ENCODE measurements at regions of chr6 and their contacts with region 1.

Region 1: DNA sequence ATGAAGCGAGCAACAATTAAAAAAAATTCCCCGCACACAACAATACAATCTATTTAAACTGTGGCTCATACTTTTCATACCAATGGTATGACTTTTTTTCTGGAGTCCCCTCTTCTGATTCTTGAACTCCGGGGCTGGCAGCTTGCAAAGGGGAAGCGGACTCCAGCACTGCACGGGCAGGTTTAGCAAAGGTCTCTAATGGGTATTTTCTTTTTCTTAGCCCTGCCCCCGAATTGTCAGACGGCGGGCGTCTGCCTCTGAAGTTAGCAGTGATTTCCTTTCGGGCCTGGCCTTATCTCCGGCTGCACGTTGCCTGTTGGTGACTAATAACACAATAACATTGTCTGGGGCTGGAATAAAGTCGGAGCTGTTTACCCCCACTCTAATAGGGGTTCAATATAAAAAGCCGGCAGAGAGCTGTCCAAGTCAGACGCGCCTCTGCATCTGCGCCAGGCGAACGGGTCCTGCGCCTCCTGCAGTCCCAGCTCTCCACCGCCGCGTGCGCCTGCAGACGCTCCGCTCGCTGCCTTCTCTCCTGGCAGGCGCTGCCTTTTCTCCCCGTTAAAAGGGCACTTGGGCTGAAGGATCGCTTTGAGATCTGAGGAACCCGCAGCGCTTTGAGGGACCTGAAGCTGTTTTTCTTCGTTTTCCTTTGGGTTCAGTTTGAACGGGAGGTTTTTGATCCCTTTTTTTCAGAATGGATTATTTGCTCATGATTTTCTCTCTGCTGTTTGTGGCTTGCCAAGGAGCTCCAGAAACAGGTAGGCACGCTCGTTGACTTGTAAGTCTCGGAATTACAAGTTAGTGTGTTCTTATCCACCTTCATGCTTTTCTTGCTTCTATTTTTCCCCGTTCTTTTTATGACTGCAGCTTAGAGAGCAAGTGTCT is at the start of gene EDN1:
- DNase-seq: peak; percentile 61 to 81
- H3K4me3 ChIP-seq: peak within 1 kb of the TSS; percentile 26 to 69 (median 50); a peak in 7 of 8 replicates
- H3K27ac ChIP-seq: no peak within 1 kb of the TSS
- H3K4me1 ChIP-seq: peaks cover 9 to 20% (median 11%) of the 10 kb centered on the region in 4 experiments
- H3K27me3 ChIP-seq: peaks cover 0 to 10% (median 2%) of the 10 kb centered on the region in 4 experiments; a peak in 4 of 7 replicates
- CTCF ChIP-seq: peak; percentile 52 to 58 (median 54)
- EP300 ChIP-seq: no peak
- POLR2A ChIP-seq: no peak
- RAD21 ChIP-seq: peak; percentile 54 to 65
- total RNA-seq, gene EDN1: 1.1 and 1.2 TPM in 2 replicates

Region 2: DNA sequence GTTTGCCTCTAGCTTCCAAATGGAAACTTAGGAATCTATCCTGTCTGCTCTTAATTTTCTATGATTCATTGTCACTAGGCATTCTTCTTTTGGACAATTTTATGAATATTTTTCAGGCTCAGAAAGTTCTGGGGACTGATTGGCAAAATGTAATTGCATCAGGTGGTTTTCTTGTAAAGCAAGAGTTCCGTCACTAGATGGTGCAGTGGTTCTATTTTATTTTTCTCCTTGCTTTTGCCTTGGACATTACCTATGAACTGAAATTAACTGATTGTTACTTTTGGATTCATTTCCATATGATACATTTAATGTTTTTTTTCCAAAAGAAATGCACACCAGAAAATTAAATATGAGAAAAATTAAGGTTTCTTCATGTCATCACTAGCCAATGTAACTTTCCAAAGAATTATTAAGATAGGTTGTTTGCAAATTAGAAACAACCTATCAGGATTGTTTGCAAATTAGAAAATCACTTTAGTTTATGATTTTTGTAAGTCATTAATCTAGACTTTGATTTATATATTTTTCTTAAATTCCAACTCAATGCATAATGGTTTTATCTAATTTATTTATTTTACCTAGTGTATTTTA is 704.7 kb before region 1 on chr6:
- CTCF ChIA-PET with region 1: interaction called, 14 read pairs
- POLR2A ChIA-PET with region 1: no interaction called
- DNase-seq: no peak
- H3K4me3 ChIP-seq: no peak overlapping the region
- H3K27ac ChIP-seq: no peak overlapping the region
- H3K4me1 ChIP-seq: peaks cover 0 to 7% (median 2%) of the 10 kb centered on the region in 4 experiments; a peak in 3 of 7 replicates
- H3K27me3 ChIP-seq: no peaks in the 10 kb centered on the region
- CTCF ChIP-seq: peak in 2 of 3 experiments; percentile 32 to 51; a peak in 2 of 4 replicates
- EP300 ChIP-seq: no peak
- POLR2A ChIP-seq: no peak
- RAD21 ChIP-seq: peak; percentile 75 to 79

Region 3: GRCh38 chr6:12233693-12234571 is 56.2 kb before region 1 on chr6:
- CTCF ChIA-PET with region 1: interaction called, 10 read pairs
- POLR2A ChIA-PET with region 1: no interaction called
- DNase-seq: peak in 1 of 2 experiments; percentile 15
- H3K4me3 ChIP-seq: no peak overlapping the region
- H3K27ac ChIP-seq: no peak overlapping the region
- H3K4me1 ChIP-seq: peaks cover 0 to 7% (median 1%) of the 10 kb centered on the region in 4 experiments; a peak in 2 of 7 replicates
- H3K27me3 ChIP-seq: no peaks in the 10 kb centered on the region
- CTCF ChIP-seq: peak; percentile 2 to 96 (median 66)
- EP300 ChIP-seq: no peak
- POLR2A ChIP-seq: no peak
- RAD21 ChIP-seq: peak; percentile 74 to 79

Region 4: DNA sequence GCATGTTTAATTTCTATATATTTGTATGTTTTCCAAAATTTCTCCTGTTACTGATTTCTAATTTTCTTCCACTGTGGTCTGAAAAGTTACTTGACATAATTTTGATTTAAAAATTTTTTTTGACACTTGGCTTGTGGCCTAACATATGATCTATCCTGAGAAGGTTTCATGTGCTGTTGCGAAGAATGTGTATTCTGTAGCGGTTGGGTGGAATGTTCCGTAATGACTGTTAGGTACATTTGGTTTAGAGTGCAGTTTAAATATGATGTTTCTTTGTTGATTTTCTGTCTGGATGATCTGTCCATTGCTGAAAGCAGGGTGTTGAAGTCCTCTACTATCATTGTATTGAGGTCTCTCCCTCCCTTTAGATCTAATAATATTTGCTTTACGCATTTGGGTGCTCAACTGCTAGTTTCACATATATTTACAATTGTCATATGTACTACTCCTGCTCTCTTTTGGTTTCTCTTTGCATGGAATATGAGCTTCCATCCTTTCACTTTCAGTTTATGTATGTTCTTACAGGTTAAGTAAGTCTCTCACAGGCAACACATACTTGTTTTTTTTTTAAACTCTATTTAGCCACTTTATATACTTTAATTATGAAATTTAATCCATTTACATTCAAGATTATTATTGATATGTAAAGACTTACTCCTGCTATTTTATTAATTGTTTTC is 19.5 kb before region 1 on chr6:
- CTCF ChIA-PET with region 1: interaction called, 15 read pairs
- POLR2A ChIA-PET with region 1: no interaction called
- DNase-seq: no peak
- H3K4me3 ChIP-seq: no peak overlapping the region
- H3K27ac ChIP-seq: no peak overlapping the region
- H3K4me1 ChIP-seq: no peaks in the 10 kb centered on the region
- H3K27me3 ChIP-seq: no peaks in the 10 kb centered on the region
- CTCF ChIP-seq: no peak
- EP300 ChIP-seq: no peak
- POLR2A ChIP-seq: no peak
- RAD21 ChIP-seq: no peak

Region 5: GRCh38 chr6:12483712-12484111 is 193.5 kb after region 1 on chr6:
- CTCF ChIA-PET with region 1: interaction called, 19 read pairs
- POLR2A ChIA-PET with region 1: no interaction called
- DNase-seq: no peak
- H3K4me3 ChIP-seq: no peak overlapping the region
- H3K27ac ChIP-seq: no peak overlapping the region
- H3K4me1 ChIP-seq: no peaks in the 10 kb centered on the region
- H3K27me3 ChIP-seq: no peaks in the 10 kb centered on the region
- CTCF ChIP-seq: no peak
- EP300 ChIP-seq: no peak
- POLR2A ChIP-seq: no peak
- RAD21 ChIP-seq: no peak

Region 6: DNA sequence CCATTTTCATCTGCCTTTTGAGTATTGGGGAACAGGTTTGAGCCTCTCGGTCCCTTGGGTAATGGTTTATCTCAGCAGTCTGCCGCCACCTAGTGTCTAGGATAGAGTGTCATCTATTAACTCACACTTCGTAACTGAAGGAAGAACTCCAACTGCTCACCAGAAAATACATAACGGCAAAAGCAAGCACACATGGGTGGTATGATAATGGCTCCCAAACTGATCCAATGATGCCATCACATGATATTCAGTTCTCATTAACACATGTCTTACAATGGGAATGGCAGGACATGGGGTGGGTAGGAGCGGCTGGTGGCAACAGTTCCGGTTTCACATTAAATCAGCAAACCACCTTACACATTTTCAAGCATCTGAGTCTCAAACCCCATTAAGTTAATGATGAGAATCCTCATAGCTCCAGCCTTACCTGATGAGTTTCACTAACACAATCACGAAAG is 315.7 kb after region 1 on chr6:
- CTCF ChIA-PET with region 1: interaction called, 103 read pairs
- POLR2A ChIA-PET with region 1: no interaction called
- DNase-seq: peak in 1 of 2 experiments; percentile 55
- H3K4me3 ChIP-seq: no peak overlapping the region
- H3K27ac ChIP-seq: no peak overlapping the region
- H3K4me1 ChIP-seq: peaks cover 0 to 6% (median 1%) of the 10 kb centered on the region in 4 experiments; a peak in 2 of 7 replicates
- H3K27me3 ChIP-seq: no peaks in the 10 kb centered on the region
- CTCF ChIP-seq: peak in 2 of 3 experiments; percentile 75 to 81; a peak in 3 of 4 replicates
- EP300 ChIP-seq: no peak
- POLR2A ChIP-seq: no peak
- RAD21 ChIP-seq: peak; percentile 93